MCF 10A (cell line): ENCODE measurements at regions of chr4 and their contacts with region 1.

Region 1: DNA sequence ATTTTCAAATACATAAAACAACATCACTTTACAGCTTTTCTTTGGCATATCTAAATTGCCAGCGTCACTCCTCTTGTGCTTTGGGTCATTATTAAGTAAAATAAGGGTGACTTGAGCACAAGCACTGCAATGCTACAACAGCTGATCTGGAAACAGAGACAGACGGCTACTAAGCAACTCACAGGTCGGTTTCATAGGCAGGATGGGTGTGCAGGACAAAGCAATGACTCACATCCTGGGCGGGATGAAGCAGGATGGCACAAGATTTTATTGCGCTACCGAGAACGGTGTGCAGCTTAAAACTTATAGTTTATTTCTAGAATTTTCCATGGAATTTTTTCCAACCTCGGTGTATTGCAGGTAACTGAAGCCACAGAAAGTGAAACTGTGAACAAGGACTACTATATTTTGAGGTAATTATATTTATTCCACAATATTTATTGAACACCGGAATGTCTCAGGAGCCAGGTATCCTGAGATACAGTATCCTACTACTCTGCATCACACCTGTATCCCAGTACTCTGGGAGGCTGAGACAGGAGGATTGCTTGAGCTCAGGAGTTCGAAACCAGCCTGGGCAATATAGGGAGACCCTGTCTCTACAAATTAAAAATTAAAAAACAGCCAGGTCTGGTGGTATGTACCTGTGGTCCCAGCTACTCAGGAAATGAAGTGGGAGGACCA is 215.5 kb downstream of the APBB2 start:
- DNase-seq: peak; percentile 92
- H3K4me3 Mint-ChIP-seq: peak overlapping the region; percentile 31
- H3K27ac Mint-ChIP-seq: peak overlapping the region; percentile 74
- H3K4me1 Mint-ChIP-seq: peaks cover 26% of the 10 kb centered on the region
- H3K27me3 Mint-ChIP-seq: no peaks in the 10 kb centered on the region
- CTCF ChIP-seq: no peak

Region 2: GRCh38 chr4:40986375-40986774 is 12.4 kb before region 1 on chr4:
- CTCF ChIA-PET with region 1: interaction called, 5 read pairs
- POLR2A ChIA-PET with region 1: interaction called, 14 read pairs
- intact Hi-C with region 1: no loop called
- DNase-seq: no peak
- H3K4me3 Mint-ChIP-seq: no peak overlapping the region
- H3K27ac Mint-ChIP-seq: peak overlapping the region; percentile 16
- H3K4me1 Mint-ChIP-seq: peaks cover 31% of the 10 kb centered on the region
- H3K27me3 Mint-ChIP-seq: no peaks in the 10 kb centered on the region
- CTCF ChIP-seq: no peak

Region 3: GRCh38 chr4:41009411-41009810 is 10.6 kb after region 1 on chr4:
- CTCF ChIA-PET with region 1: interaction called, 5 read pairs
- POLR2A ChIA-PET with region 1: interaction called, 13 read pairs
- intact Hi-C with region 1: no loop called
- DNase-seq: peak; percentile 65
- H3K4me3 Mint-ChIP-seq: no peak overlapping the region
- H3K27ac Mint-ChIP-seq: peak overlapping the region; percentile 71
- H3K4me1 Mint-ChIP-seq: peaks cover 14% of the 10 kb centered on the region
- H3K27me3 Mint-ChIP-seq: no peaks in the 10 kb centered on the region
- CTCF ChIP-seq: no peak

Region 4: GRCh38 chr4:41432881-41433280 is 434.1 kb after region 1 on chr4:
- CTCF ChIA-PET with region 1: no interaction called
- POLR2A ChIA-PET with region 1: no interaction called
- intact Hi-C with region 1: no loop called
- DNase-seq: peak; percentile 84
- H3K4me3 Mint-ChIP-seq: no peak overlapping the region
- H3K27ac Mint-ChIP-seq: peak overlapping the region; percentile 46
- H3K4me1 Mint-ChIP-seq: peaks cover 39% of the 10 kb centered on the region
- H3K27me3 Mint-ChIP-seq: no peaks in the 10 kb centered on the region
- CTCF ChIP-seq: no peak